Adrenal gland (tissue), 19 donors: ENCODE measurements at regions of chr18 and their contacts with region 1.

Region 1: GRCh38 chr18:864872-865273 is 39.8 kb upstream of the ADCYAP1 start:
- DNase-seq: peak; percentile 62 to 83 (median 74)
- H3K4me3 ChIP-seq: no peak overlapping the region
- H3K27ac ChIP-seq: no peak overlapping the region
- H3K4me1 ChIP-seq: no peaks in the 10 kb centered on the region
- H3K27me3 ChIP-seq: no peaks in the 10 kb centered on the region
- CTCF ChIP-seq: peak; percentile 91 to 100 (median 98)
- POLR2A ChIP-seq: no peak

Region 2: GRCh38 chr18:961644-962355 is 96.9 kb after region 1 on chr18:
- intact Hi-C with region 1: loop called in 1 of 2 experiments (anchors 10 kb)
- DNase-seq: peak in 6 of 7 donors; percentile 25 to 67 (median 46)
- H3K4me3 ChIP-seq: peak overlapping the region in 2 of 4 donors; percentile 1 to 35
- H3K27ac ChIP-seq: peak overlapping the region in 1 of 5 donors; percentile 32
- H3K4me1 ChIP-seq: no peaks in the 10 kb centered on the region
- H3K27me3 ChIP-seq: no peaks in the 10 kb centered on the region
- CTCF ChIP-seq: peak; percentile 69 to 95 (median 77)
- POLR2A ChIP-seq: no peak